ENCODE measurements at regions of chr5 and their contacts with region 1.

Region 1: DNA sequence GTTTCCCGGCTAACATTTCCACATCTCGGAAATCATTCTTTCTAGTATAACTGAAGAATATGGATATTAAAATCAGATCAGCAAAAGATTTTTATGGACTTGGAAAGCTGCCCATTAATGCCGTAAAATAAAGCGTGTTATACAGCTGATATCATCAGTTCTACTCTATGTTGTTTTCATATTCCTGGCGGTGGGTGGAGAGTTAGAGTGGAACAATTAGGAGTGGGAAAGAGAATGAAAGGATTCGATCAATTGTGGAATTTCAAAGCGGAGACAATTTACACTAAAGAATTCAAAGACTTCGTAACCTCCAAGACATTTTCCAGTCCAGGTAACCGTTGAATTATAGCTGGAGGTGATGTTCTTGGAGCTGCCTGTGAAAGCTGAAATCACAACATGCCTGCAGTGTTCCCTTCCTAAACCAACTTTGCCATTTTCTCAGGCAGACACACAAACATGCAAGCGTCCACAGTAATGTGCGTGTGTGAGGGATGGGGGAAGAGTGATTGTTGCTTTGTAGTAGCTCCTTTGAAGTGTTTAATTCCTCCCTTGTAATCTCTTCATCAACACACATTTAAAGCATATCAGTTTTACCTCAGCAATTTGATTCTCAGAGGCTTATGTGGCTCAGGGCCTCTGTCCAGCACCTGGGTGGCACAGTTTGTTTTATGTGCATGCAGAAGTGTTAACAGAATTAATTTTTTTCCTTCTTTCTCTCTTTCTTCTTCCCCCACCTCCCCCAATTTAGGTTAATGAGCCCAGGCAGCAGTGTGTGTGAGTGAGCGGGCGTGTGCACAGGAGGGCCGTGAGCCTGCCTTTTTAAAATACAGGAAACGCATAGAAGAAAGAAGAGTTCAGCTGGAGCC is 544.1 kb downstream of the RAB3C start:
- H3K4me3 Mint-ChIP-seq: no peak overlapping the region
- H3K27ac Mint-ChIP-seq: no peak overlapping the region
- H3K4me1 Mint-ChIP-seq: no peaks in the 10 kb centered on the region
- H3K27me3 Mint-ChIP-seq: no peaks in the 10 kb centered on the region

Region 2: DNA sequence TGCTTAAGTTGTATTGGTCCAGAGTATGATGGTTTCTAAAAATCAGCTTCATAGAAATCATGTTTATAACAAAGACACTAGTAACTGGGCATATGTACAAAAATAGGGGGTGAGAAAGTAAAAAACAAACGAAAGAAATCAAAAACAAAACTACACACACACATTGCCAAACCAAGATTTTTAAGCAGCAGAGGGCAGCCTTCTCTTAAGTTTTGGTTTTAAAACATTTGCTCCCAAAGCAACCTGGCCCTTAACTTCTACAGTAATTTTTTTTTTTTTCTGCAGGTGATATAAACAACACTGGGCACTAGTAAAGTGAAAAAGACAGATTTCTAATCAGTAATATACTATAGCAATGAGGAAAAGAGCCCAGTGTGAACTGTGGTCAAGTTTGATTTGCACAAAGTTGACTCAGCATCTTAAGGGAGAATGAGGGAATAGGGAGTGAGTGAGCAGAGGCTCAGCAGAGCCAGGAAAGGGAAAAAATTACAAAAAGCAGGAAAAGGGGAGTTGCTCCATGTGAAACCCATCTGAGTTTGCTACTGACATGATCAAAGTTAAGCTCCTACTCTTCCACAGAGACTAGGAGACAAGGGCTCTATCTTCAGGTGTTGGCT is 649.1 kb before region 1 on chr5:
- intact Hi-C with region 1: loop called (anchors 10 kb)
- H3K4me3 Mint-ChIP-seq: no peak overlapping the region
- H3K27ac Mint-ChIP-seq: no peak overlapping the region
- H3K4me1 Mint-ChIP-seq: peaks cover 19% of the 10 kb centered on the region
- H3K27me3 Mint-ChIP-seq: no peaks in the 10 kb centered on the region

Region 3: DNA sequence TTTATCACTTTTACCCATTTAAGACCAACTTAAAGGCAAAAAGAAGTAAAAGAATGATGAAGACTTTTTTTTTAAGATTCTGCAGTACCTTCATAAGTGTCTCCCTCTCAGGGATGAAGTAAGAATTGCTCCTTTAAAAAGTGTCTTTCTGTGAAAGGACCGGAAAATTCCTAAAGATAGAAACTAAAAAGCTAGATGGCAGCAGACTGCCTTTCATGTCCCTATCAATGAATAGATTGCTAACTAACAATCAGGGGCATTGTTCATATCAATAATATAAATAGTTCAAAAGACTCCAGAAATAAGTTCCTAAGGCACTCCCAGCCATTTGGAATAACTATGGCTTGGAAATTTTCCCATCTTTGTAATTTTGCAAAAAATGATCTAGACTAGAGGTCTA is 208.6 kb after region 1 on chr5:
- intact Hi-C with region 1: no loop called
- H3K4me3 Mint-ChIP-seq: no peak overlapping the region
- H3K27ac Mint-ChIP-seq: no peak overlapping the region
- H3K4me1 Mint-ChIP-seq: no peaks in the 10 kb centered on the region
- H3K27me3 Mint-ChIP-seq: no peaks in the 10 kb centered on the region